ENCODE measurements at regions of chr18 and their contacts with region 1.

Region 1: GRCh38 chr18:69898241-69898861 is 49.3 kb downstream of the CD226 start:
- DNase-seq: peak in 6 of 9 experiments; percentile 16 to 65 (median 34)
- ATAC-seq: peak; percentile 28
- H3K4me3 ChIP-seq: peak overlapping the region; percentile 25 to 28
- H3K4me3 Mint-ChIP-seq: peak overlapping the region; percentile 82
- H3K27ac ChIP-seq: peak overlapping the region; percentile 25 to 88
- H3K27ac Mint-ChIP-seq: peak overlapping the region; percentile 94
- H3K4me1 ChIP-seq: peaks cover 31% of the 10 kb centered on the region
- H3K4me1 Mint-ChIP-seq: peaks cover 72% of the 10 kb centered on the region
- H3K27me3 ChIP-seq: no peaks in the 10 kb centered on the region
- H3K27me3 Mint-ChIP-seq: no peaks in the 10 kb centered on the region
- CTCF ChIP-seq: no peak

Region 2: GRCh38 chr18:68714609-68715496 is 1183.5 kb before region 1 on chr18 and contains the start of gene TMX3:
- CTCF ChIA-PET with region 1: no interaction called
- POLR2A ChIA-PET with region 1: no interaction called
- intact Hi-C with region 1: loop called in 1 of 2 experiments (anchors 10 kb)
- DNase-seq: peak; percentile 83 to 97 (median 91)
- ATAC-seq: peak; percentile 98
- H3K4me3 ChIP-seq: peak within 1 kb of the TSS; percentile 60 to 81
- H3K4me3 Mint-ChIP-seq: peak within 1 kb of the TSS; percentile 97
- H3K27ac ChIP-seq: peak within 1 kb of the TSS; percentile 57 to 60
- H3K27ac Mint-ChIP-seq: peak within 1 kb of the TSS; percentile 94
- H3K4me1 ChIP-seq: peaks cover 31% of the 10 kb centered on the region
- H3K4me1 Mint-ChIP-seq: peaks cover 50% of the 10 kb centered on the region
- H3K27me3 ChIP-seq: no peaks in the 10 kb centered on the region
- H3K27me3 Mint-ChIP-seq: no peaks in the 10 kb centered on the region
- CTCF ChIP-seq: no peak
- total RNA-seq, gene TMX3: 28.3 to 28.5 TPM

Region 3: GRCh38 chr18:69845593-69846506 is 52.5 kb before region 1 on chr18:
- CTCF ChIA-PET with region 1: interaction called, 3 read pairs
- POLR2A ChIA-PET with region 1: no interaction called
- intact Hi-C with region 1: loop called in 1 of 2 experiments (anchors 5 kb)
- DNase-seq: peak in 1 of 9 experiments; percentile 3
- ATAC-seq: no peak
- H3K4me3 ChIP-seq: no peak overlapping the region
- H3K4me3 Mint-ChIP-seq: no peak overlapping the region
- H3K27ac ChIP-seq: no peak overlapping the region
- H3K27ac Mint-ChIP-seq: no peak overlapping the region
- H3K4me1 ChIP-seq: no peaks in the 10 kb centered on the region
- H3K4me1 Mint-ChIP-seq: no peaks in the 10 kb centered on the region
- H3K27me3 ChIP-seq: no peaks in the 10 kb centered on the region
- H3K27me3 Mint-ChIP-seq: no peaks in the 10 kb centered on the region
- CTCF ChIP-seq: no peak

Region 4: GRCh38 chr18:69882965-69883668 is 15.2 kb before region 1 on chr18:
- CTCF ChIA-PET with region 1: no interaction called
- POLR2A ChIA-PET with region 1: no interaction called
- intact Hi-C with region 1: loop called in 1 of 2 experiments (anchors 2 kb)
- DNase-seq: no peak
- ATAC-seq: no peak
- H3K4me3 ChIP-seq: no peak overlapping the region
- H3K4me3 Mint-ChIP-seq: no peak overlapping the region
- H3K27ac ChIP-seq: no peak overlapping the region
- H3K27ac Mint-ChIP-seq: no peak overlapping the region
- H3K4me1 ChIP-seq: peaks cover 3% of the 10 kb centered on the region
- H3K4me1 Mint-ChIP-seq: peaks cover 50% of the 10 kb centered on the region
- H3K27me3 ChIP-seq: no peaks in the 10 kb centered on the region
- H3K27me3 Mint-ChIP-seq: no peaks in the 10 kb centered on the region
- CTCF ChIP-seq: no peak

Region 5: DNA sequence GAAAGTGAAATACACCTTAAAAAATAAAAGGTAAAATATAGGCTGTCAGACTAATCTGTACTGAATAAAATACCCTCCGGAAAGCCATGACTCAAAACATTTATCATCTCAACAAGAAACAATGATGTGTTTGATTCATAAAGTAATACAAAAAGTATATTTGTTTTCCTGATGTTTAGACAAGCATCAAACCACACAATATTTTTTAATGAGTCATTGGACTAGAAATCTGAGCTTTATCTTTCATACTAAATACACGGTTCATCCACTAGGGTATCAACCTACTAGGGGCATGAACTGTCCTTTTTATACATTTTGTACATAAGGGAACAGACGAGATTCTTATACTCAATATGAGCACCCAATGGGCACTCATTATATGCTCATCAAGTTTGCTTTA is 18.1 kb after region 1 on chr18:
- CTCF ChIA-PET with region 1: interaction called, 4 read pairs
- POLR2A ChIA-PET with region 1: interaction called, 6 read pairs
- intact Hi-C with region 1: loop called in 1 of 2 experiments (anchors 2 kb)
- DNase-seq: no peak
- ATAC-seq: no peak
- H3K4me3 ChIP-seq: no peak overlapping the region
- H3K4me3 Mint-ChIP-seq: no peak overlapping the region
- H3K27ac ChIP-seq: no peak overlapping the region
- H3K27ac Mint-ChIP-seq: no peak overlapping the region
- H3K4me1 ChIP-seq: no peaks in the 10 kb centered on the region
- H3K4me1 Mint-ChIP-seq: peaks cover 52% of the 10 kb centered on the region
- H3K27me3 ChIP-seq: no peaks in the 10 kb centered on the region
- H3K27me3 Mint-ChIP-seq: no peaks in the 10 kb centered on the region
- CTCF ChIP-seq: no peak

Region 6: GRCh38 chr18:69935319-69936190 is 37.2 kb after region 1 on chr18:
- CTCF ChIA-PET with region 1: interaction called, 7 read pairs
- POLR2A ChIA-PET with region 1: interaction called, 18 read pairs
- intact Hi-C with region 1: loop called (anchors 1 to 2 kb)
- DNase-seq: peak; percentile 64 to 95 (median 80)
- ATAC-seq: peak; percentile 96
- H3K4me3 ChIP-seq: peak overlapping the region; percentile 1 to 18
- H3K4me3 Mint-ChIP-seq: no peak overlapping the region
- H3K27ac ChIP-seq: peak overlapping the region; percentile 25 to 63
- H3K27ac Mint-ChIP-seq: no peak overlapping the region
- H3K4me1 ChIP-seq: peaks cover 75% of the 10 kb centered on the region
- H3K4me1 Mint-ChIP-seq: peaks cover 38% of the 10 kb centered on the region
- H3K27me3 ChIP-seq: no peaks in the 10 kb centered on the region
- H3K27me3 Mint-ChIP-seq: no peaks in the 10 kb centered on the region
- CTCF ChIP-seq: no peak

Region 7: DNA sequence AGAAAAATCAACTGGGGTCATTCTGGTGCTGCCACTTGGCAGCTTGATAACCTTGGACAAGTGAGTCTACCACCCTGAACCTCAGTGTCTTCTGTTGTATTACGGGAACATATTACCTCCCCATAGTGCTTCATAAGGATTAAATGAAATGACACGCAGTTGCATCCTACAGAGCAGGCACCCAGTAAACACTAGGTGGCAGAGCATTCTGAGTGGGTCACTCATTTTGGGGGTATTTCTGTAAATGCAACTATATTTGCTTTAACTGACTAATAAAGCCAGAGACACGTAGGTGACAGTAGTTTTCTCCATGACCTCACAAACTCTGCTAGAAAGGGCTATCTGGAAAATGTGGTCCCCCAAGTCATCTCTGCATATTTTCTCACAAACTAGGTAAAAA is 44.7 kb after region 1 on chr18:
- CTCF ChIA-PET with region 1: interaction called, 4 read pairs
- POLR2A ChIA-PET with region 1: interaction called, 18 read pairs
- intact Hi-C with region 1: loop called in 1 of 2 experiments (anchors 2 kb)
- DNase-seq: peak in 2 of 9 experiments; percentile 42 to 54
- ATAC-seq: peak; percentile 30
- H3K4me3 ChIP-seq: no peak overlapping the region
- H3K4me3 Mint-ChIP-seq: peak overlapping the region; percentile 62
- H3K27ac ChIP-seq: peak overlapping the region in 1 of 2 experiments; percentile 42
- H3K27ac Mint-ChIP-seq: peak overlapping the region; percentile 84
- H3K4me1 ChIP-seq: peaks cover 74% of the 10 kb centered on the region
- H3K4me1 Mint-ChIP-seq: peaks cover 69% of the 10 kb centered on the region
- H3K27me3 ChIP-seq: no peaks in the 10 kb centered on the region
- H3K27me3 Mint-ChIP-seq: no peaks in the 10 kb centered on the region
- CTCF ChIP-seq: peak; percentile 15

Measured in CD8-positive, alpha-beta T cell (primary cell).